GM13977 (cell line): ENCODE measurements at regions of chr9 and their contacts with region 1.

Region 1: DNA sequence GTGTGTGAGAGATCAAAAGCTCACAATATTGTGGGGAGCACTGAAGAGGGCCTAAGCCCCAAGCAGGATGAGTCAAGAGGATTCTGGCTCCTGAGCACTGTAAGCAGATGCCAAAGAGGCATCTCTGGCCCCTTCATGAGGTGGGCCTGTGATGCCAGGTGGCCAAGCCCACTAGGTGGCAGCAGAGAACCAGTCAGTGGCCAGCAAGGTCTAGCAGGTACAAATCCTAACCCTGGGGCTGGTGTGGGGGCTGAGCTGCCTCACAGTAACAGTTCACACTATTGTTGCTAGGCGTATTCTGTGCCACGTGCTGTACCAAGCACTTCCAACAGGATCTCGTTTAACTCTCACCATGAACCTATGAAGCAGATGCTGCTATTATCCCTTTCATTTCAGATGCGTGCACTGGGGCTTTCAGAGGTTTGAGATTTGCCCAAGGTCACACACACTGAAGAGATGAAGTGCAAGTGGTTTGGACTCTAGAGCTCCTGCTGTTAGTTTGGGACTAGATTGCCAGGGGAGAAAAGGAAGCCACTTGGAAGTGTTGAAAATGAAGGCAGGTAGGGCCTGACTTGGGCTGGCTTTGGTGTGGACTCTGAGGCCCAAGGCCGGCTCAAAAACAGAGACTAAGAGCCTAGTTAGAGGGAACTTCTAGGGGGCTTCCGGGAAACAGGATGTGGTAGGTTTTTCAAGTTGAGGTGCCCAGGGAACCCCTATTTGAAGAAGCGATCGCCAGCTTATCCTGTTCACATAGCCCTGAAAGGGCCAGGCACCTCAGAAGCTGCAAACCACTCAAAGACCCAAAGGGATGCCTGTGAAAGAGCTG is 4.4 kb upstream of the MLANA start:
- DNase-seq: peak; percentile 82
- CTCF ChIP-seq: peak; percentile 98

Region 2: DNA sequence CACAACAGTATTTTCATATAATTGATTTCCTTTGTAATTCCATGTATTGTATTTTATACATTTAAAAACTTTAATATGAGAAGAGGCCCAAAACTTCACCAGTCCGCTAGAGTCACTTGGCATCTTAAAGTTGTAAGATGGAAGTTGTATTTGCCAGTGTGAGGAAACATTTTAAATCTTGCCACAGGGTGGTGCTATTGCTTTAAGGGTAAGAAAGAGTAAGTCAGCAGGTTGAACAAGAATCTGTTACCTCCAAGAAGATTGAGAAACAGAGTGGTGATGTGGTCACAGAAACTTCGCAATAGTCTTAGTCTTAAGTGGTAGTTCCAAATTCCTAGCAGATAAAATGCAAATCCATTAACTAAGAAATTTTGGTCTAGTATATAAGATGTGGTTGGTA is 168.9 kb after region 1 on chr9:
- in situ Hi-C with region 1: loop called (anchors 10 kb)
- DNase-seq: peak; percentile 44
- CTCF ChIP-seq: peak; percentile 65

Region 3: DNA sequence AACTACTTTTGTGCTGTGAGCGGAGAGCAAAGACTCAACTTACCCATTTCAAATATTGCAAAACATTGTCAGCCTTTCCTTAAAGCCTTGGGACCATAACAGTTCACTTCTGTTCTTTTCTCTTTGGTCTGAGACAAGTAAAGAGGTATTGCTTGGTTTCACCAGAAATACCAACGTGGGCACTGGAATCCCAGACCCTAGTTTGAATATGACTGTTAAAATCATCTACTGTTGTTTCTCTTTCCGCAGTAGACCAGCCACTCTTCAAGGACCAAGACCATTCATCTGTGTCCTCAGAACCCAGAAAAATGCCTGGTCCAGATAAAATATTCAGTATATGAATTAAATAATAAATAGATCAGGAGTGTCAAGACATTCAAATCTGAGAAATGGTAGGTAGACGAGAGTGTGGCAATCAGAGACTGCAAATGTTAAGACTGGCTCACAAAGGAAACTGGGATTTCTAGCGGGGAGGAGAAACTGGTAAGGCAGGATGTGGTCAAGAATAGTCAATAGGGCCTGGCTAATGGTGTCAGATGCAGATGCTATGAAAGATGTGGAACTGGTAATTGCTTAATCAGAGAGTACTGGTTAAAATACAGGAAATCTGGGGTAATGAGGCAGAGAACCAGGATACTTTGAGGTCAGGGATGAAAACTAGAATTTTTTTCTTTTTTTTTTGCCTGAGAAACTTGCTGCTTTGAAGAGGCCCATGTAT is 247.2 kb after region 1 on chr9:
- in situ Hi-C with region 1: no loop called
- DNase-seq: peak; percentile 55
- CTCF ChIP-seq: no peak

Region 4: GRCh38 chr9:6305954-6306563 is 419.7 kb after region 1 on chr9:
- in situ Hi-C with region 1: loop called (anchors 25 kb)
- DNase-seq: peak; percentile 33
- CTCF ChIP-seq: peak; percentile 61